ENCODE measurements at regions of chr19 and their contacts with region 1.

Region 1: DNA sequence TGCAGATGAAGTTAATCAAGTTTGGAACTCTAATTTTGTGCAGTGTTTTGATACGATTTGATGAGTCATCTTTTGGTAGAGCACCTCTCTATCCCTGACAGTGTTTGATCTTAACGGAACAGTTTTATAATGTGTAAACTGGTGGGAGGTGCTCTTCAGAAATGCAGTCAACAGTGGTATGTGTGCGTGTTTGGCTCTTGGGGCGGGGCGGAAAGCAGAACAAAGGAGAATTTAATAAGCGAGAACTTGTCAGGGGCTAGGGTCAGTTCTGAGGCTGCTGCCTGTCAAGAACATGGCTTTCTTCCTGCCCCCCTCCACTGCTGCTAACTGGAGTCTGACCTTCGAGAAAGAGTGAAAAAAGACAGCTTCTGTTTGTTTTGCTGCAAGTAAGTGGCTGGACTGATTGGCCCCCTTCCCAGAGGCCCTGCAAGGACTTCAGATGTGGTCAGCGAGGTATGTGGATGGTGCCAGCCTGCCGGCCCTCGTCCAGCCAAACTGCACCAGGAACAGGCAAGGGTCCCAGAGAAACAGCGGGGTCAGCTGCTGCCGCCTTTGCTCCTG is 40.8 kb downstream of the BBC3 start:
- DNase-seq: peak; percentile 87
- H3K4me3 Mint-ChIP-seq: peak overlapping the region; percentile 38
- H3K27ac Mint-ChIP-seq: peak overlapping the region; percentile 76
- H3K4me1 Mint-ChIP-seq: peaks cover 73% of the 10 kb centered on the region
- H3K27me3 Mint-ChIP-seq: no peaks in the 10 kb centered on the region

Region 2: GRCh38 chr19:47035127-47036096 is 154.8 kb before region 1 on chr19:
- CTCF ChIA-PET with region 1: no interaction called
- intact Hi-C with region 1: no loop called
- DNase-seq: peak; percentile 97
- H3K4me3 Mint-ChIP-seq: peak overlapping the region; percentile 81
- H3K27ac Mint-ChIP-seq: peak overlapping the region; percentile 43
- H3K4me1 Mint-ChIP-seq: peaks cover 19% of the 10 kb centered on the region
- H3K27me3 Mint-ChIP-seq: peaks cover 8% of the 10 kb centered on the region

Region 3: DNA sequence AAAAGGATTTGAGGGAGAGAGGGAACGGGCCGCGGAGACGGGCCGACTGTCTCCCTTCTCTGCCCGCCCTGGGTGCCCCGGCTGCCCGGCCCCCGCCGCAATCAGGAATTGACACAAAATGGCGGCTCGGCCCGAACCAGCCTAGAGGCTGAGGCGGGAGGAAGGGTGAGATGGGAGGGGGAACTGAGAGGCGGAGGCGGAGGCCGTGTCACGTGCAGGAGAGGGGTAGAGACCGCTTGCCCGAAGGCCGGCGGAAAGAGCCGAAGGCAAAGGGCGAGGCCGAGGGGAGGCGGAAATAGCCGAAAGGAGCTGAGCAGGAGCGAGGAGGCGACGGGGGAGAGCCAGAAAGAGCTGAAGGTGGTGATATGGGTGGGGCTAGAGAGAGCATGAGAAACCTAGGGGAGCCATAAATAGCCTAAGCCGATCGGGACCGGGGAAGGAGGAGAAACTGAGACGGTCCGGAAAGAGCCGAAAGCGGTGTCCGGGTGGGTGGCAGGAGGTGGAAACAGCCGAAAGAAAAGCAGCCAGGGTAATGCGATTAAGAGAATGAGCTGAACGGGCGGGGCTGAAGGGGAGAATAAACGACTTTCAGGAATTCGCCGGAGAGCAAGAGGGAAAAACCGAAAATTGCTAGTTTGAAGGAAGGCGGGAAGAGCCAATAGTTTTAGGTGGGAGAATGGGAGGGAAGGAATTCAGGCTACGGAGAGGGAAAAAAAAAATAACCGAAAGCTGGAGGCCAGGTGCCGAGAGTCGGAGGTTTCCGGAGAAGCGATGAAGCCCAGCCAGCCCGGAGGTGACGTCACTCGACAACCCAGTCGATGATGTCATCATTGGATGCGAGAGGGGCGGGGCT is 77.0 kb before region 1 on chr19 and contains the start of gene ZC3H4:
- CTCF ChIA-PET with region 1: no interaction called
- intact Hi-C with region 1: loop called (anchors 1 kb)
- DNase-seq: peak; percentile 100
- H3K4me3 Mint-ChIP-seq: peak within 1 kb of the TSS; percentile 99
- H3K27ac Mint-ChIP-seq: peak within 1 kb of the TSS; percentile 100
- H3K4me1 Mint-ChIP-seq: peaks cover 26% of the 10 kb centered on the region
- H3K27me3 Mint-ChIP-seq: no peaks in the 10 kb centered on the region
- total RNA-seq, gene ZC3H4: 46.0 to 48.8 TPM

Region 4: GRCh38 chr19:47152224-47153017 is 37.8 kb before region 1 on chr19:
- CTCF ChIA-PET with region 1: interaction called, 38 read pairs
- intact Hi-C with region 1: loop called (anchors 5 kb)
- DNase-seq: no peak
- H3K4me3 Mint-ChIP-seq: no peak overlapping the region
- H3K27ac Mint-ChIP-seq: peak overlapping the region; percentile 30
- H3K4me1 Mint-ChIP-seq: peaks cover 60% of the 10 kb centered on the region
- H3K27me3 Mint-ChIP-seq: no peaks in the 10 kb centered on the region

Region 5: DNA sequence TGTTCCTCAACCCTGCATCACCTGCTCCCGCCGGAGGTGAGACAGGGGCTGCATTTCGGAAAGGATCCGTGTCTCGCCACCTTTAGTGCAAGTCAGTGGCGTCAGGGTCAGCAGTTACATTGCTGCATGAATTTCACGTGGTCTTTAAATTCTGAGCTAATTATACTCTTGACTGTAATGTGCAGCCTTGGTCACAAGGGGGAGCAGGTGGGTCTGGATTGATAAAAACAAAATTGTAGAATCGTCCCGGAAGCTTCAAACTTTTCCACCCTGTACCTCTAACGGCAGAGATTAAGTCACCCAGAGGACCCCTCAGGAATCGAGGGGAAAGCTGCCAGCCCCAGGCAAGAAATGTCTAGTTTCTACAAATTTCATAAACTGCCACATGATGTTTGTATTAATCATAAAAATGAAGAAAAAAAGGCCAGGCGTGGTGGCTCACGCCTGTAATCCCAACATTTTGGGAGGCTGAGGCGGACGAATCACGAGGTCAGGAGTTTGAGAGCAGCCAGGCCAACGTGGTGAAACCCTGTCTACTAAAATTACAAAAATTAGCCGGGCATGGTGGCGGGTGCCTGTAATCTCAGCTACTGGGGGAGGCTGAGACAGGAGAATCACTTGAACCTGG is 20.6 kb after region 1 on chr19:
- CTCF ChIA-PET with region 1: interaction called, 21 read pairs
- intact Hi-C with region 1: loop called (anchors 2 kb)
- DNase-seq: peak; percentile 94
- H3K4me3 Mint-ChIP-seq: no peak overlapping the region
- H3K27ac Mint-ChIP-seq: peak overlapping the region; percentile 93
- H3K4me1 Mint-ChIP-seq: peaks cover 14% of the 10 kb centered on the region
- H3K27me3 Mint-ChIP-seq: no peaks in the 10 kb centered on the region

Region 6: GRCh38 chr19:47243776-47244547 is 53.7 kb after region 1 on chr19:
- CTCF ChIA-PET with region 1: interaction called, 16 read pairs
- intact Hi-C with region 1: loop called (anchors 1 kb)
- DNase-seq: peak; percentile 95
- H3K4me3 Mint-ChIP-seq: peak overlapping the region; percentile 97
- H3K27ac Mint-ChIP-seq: peak overlapping the region; percentile 97
- H3K4me1 Mint-ChIP-seq: peaks cover 34% of the 10 kb centered on the region
- H3K27me3 Mint-ChIP-seq: no peaks in the 10 kb centered on the region